Left colon (tissue), 2 donors: ENCODE measurements at regions of chr14 and their contacts with region 1.

Region 1: GRCh38 chr14:20690848-20691523 is 2.4 kb downstream of the ANG start:
- DNase-seq: peak in 1 of 2 donors; percentile 32
- ATAC-seq: peak; percentile 49

Region 2: DNA sequence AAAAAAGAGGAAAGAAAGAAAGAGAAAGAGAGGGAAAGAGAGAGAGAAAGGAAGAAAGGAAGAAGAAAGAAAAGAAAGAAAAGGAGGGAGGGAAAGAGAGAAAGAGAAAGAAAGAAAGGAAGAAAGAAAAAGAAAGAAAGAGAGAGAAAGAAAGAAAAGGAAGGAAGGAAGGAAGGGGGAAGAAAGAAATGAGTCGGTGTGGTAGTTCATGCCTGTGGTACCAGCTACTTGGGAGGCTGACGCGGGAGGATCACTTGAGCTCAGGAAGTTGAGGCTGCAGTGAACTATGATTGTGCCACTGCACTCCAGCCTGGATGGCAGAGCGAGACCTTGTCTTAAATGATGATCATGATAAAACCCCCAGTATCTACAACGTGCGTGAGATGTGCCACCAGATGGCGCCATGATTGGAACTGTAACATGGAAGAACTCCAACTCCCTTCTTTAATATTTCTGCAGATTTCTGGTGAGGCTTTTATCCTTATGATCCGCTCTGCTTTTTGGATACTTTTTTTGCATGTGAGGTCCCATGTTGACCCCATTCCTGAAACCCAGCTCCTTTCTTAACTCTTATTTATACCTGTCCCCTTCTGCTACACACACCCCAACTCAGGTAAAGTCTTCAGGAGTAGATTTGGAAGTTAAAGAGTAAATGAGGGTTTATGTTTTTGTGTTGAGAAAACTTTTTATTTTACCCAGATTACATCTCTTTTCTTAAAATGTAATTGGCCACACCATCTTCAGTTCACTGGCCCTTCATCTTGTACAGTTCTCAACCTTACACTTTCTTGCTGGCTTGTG is 160.0 kb before region 1 on chr14:
- intact Hi-C with region 1: loop called in 1 of 2 experiments (anchors 5 kb)
- DNase-seq: peak; percentile 46 to 88
- ATAC-seq: peak; percentile 67